Spleen (tissue), 13 donors: ENCODE measurements at regions of chr9 and their contacts with region 1.

Region 1: DNA sequence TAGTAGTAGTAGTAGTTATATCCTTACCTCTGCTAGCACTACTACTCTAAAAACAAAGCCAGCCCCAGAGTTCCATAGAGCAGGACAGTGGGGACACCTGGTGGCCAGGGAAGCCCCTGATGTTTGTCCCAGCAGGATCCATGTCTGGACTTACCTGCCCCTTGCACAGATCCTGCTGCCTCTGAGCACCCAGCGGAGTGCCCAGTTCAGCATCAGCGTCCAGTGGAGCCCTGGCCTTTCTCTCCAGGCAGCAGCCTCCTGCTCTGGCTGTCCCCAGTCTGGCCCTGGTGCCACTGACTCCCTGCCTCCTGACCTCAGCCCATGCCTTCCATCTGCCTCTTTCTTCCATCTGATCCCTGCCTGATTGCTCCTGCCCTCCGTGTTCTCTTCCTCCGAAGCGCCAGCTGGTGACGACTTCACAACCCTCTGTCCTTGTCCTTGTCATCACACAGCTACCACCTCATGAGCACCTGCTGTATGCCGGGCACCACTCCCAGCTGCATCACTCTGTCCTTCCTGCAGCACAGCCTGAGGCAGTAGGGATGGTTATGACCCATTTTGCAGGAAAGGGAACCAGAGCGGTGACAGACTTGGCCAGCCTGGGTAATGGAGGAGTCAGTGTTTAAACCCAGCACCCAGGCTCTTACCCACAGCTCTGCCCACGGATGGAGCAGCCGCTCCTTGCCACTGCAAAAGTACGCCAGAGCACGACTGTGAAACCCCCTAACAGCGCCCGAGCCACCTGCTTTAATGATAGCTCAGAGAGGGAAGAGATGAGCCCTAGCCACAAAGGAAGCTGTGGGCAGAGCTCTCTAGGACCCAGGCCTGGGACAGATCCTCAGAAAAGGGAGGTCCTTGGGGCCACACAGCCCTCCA is 11.5 kb downstream of the SARDH start:
- DNase-seq: peak; percentile 63
- H3K4me3 ChIP-seq: no peak overlapping the region
- H3K27ac ChIP-seq: no peak overlapping the region
- H3K4me1 ChIP-seq: peaks cover 0 to 3% (median 0%) of the 10 kb centered on the region in 6 donors
- H3K27me3 ChIP-seq: peaks cover 0 to 40% (median 0%) of the 10 kb centered on the region in 7 donors
- CTCF ChIP-seq: peak in 10 of 11 experiments; percentile 7 to 65 (median 40)
- POLR2A ChIP-seq: no peak

Region 2: GRCh38 chr9:133532937-133533668 is 193.5 kb before region 1 on chr9:
- intact Hi-C with region 1: loop called (anchors 10 kb)
- DNase-seq: peak; percentile 85
- H3K4me3 ChIP-seq: no peak overlapping the region
- H3K27ac ChIP-seq: peak overlapping the region in 1 of 8 donors; percentile 65
- H3K4me1 ChIP-seq: peaks cover 9 to 49% (median 18%) of the 10 kb centered on the region in 6 donors
- H3K27me3 ChIP-seq: peaks cover 0 to 87% (median 23%) of the 10 kb centered on the region in 7 donors
- CTCF ChIP-seq: peak in 8 of 11 experiments; percentile 13 to 75 (median 40)
- POLR2A ChIP-seq: no peak

Region 3: DNA sequence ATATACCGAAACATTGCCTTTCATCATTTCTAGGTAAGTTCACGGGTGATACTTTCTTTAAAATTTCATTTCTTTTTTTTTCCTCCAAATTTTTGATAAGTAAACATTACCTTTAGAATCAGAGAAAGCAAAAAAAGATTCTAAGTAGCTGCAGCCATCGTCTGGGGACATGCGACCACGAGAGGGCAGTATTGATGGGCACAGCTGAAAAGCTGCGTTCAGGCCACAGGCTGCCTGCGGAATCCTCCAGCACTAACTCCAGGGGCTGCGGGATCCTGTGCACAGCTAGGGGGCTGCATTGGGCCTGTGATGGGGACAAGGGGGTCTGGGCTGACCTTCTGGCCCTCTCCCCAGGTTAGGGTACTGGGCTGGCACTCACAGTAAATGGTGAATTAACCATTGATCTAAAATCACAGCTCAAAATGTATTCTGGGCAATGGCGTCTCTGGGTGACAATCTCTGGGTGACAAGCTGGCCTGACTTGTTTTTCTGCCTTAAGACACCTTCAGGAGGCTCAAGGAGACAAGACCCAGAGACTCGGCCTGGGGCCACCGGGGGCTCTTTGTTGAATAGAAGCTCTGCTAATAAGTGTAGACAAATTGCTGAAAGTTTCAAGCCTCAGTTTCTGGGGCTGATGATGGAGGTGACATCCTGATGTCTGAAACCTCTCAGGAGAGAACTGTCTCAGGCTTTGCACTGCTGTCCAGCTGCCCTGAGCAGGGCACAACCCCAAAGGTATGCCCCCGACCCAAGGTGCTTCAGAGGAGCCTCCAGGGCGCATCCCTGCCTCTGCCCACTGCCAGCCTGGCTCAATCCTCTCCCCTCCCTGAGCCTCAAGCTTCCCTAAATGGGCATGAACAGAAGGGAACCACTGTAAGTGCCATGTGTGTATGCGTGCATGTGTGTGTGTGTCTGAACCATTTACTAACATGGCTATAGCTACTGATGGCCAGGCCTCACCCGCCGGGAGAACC is 55.8 kb after region 1 on chr9:
- intact Hi-C with region 1: no loop called
- DNase-seq: peak; percentile 89
- H3K4me3 ChIP-seq: no peak overlapping the region
- H3K27ac ChIP-seq: peak overlapping the region in 1 of 8 donors; percentile 16
- H3K4me1 ChIP-seq: peaks cover 4 to 59% (median 44%) of the 10 kb centered on the region in 6 donors
- H3K27me3 ChIP-seq: peaks cover 0 to 47% (median 0%) of the 10 kb centered on the region in 7 donors
- CTCF ChIP-seq: peak; percentile 48 to 89 (median 77)
- POLR2A ChIP-seq: no peak